B cell (primary cell): ENCODE measurements at regions of chr9 and their contacts with region 1.

Region 1: GRCh38 chr9:130042833-130043653 is at the start of gene FNBP1:
- DNase-seq: peak; percentile 88
- ATAC-seq: peak; percentile 76
- H3K4me3 ChIP-seq: peak within 1 kb of the TSS; percentile 74 to 97 (median 95)
- H3K4me3 Mint-ChIP-seq: peak within 1 kb of the TSS; percentile 100
- H3K27ac ChIP-seq: peak within 1 kb of the TSS; percentile 81 to 93
- H3K27ac Mint-ChIP-seq: peak within 1 kb of the TSS; percentile 98
- H3K4me1 ChIP-seq: peaks cover 51 to 62% of the 10 kb centered on the region in 2 donors
- H3K4me1 Mint-ChIP-seq: peaks cover 63% of the 10 kb centered on the region
- H3K27me3 ChIP-seq: no peaks in the 10 kb centered on the region
- H3K27me3 Mint-ChIP-seq: no peaks in the 10 kb centered on the region
- CTCF ChIP-seq: no peak
- total RNA-seq, gene FNBP1: 318 and 337 TPM in 2 replicates

Region 2: GRCh38 chr9:129835021-129835871 is 207.8 kb before region 1 on chr9 and contains the starts of genes C9orf78 and USP20:
- CTCF ChIA-PET with region 1: no interaction called
- POLR2A ChIA-PET with region 1: no interaction called
- intact Hi-C with region 1: loop called (anchors 5 kb)
- DNase-seq: peak; percentile 99
- ATAC-seq: peak; percentile 95
- H3K4me3 ChIP-seq: peak within 1 kb of the TSS; percentile 75 to 98 (median 85)
- H3K4me3 Mint-ChIP-seq: peak within 1 kb of the TSS; percentile 98
- H3K27ac ChIP-seq: peak within 1 kb of the TSS; percentile 85 to 92
- H3K27ac Mint-ChIP-seq: peak within 1 kb of the TSS; percentile 99
- H3K4me1 ChIP-seq: peaks cover 22 to 35% of the 10 kb centered on the region in 2 donors
- H3K4me1 Mint-ChIP-seq: peaks cover 51% of the 10 kb centered on the region
- H3K27me3 ChIP-seq: no peaks in the 10 kb centered on the region
- H3K27me3 Mint-ChIP-seq: no peaks in the 10 kb centered on the region
- CTCF ChIP-seq: no peak
- total RNA-seq, gene C9orf78: 42.8 and 43.6 TPM in 2 replicates
- total RNA-seq, gene USP20: 49.5 and 52.2 TPM in 2 replicates

Region 3: GRCh38 chr9:129988607-129989361 is 54.3 kb before region 1 on chr9:
- CTCF ChIA-PET with region 1: interaction called, 7 read pairs
- POLR2A ChIA-PET with region 1: interaction called, 107 read pairs
- intact Hi-C with region 1: loop called (anchors 1 kb)
- DNase-seq: peak; percentile 92
- ATAC-seq: peak; percentile 74
- H3K4me3 ChIP-seq: peak overlapping the region in 1 of 5 experiments; percentile 45
- H3K4me3 Mint-ChIP-seq: peak overlapping the region; percentile 76
- H3K27ac ChIP-seq: peak overlapping the region; percentile 92
- H3K27ac Mint-ChIP-seq: peak overlapping the region; percentile 93
- H3K4me1 ChIP-seq: peaks cover 77 to 90% of the 10 kb centered on the region in 2 donors
- H3K4me1 Mint-ChIP-seq: peaks cover 71% of the 10 kb centered on the region
- H3K27me3 ChIP-seq: no peaks in the 10 kb centered on the region
- H3K27me3 Mint-ChIP-seq: no peaks in the 10 kb centered on the region
- CTCF ChIP-seq: no peak

Region 4: DNA sequence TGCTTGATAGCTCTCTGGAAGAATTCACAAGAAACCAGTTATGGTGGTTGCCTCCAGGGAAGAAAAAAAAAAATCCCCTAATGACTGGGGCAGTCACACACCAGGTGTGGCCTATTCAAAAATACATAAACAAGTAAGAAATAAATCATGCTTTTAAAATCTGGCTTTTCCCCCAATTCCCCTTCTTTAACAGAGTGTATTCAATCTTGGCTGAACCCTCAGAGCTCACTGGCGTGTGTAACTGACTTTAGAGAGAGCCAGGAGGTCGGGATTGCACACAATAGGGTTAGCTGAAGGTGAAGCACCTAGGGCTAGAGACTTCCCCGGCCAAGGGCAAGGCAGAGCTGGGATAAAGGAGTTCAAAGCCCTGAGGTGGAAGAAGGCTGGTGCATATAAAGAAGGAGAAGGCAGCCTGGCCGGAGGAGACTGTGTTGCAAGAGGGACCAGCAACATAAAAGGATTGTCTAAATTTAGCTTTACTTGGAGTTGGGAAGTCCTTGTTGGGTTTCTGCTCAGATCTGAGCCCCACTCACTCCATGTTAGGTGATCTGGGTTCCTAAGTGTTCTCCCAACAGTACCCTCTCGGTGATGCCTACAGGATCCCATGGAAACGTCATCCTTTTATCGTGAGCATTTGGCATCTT is 19.8 kb before region 1 on chr9:
- CTCF ChIA-PET with region 1: interaction called, 8 read pairs
- POLR2A ChIA-PET with region 1: interaction called, 20 read pairs
- intact Hi-C with region 1: loop called (anchors 2 kb)
- DNase-seq: peak; percentile 85
- ATAC-seq: peak; percentile 82
- H3K4me3 ChIP-seq: peak overlapping the region in 3 of 5 experiments; percentile 5 to 45 (median 28)
- H3K4me3 Mint-ChIP-seq: peak overlapping the region; percentile 88
- H3K27ac ChIP-seq: peak overlapping the region; percentile 87 to 95
- H3K27ac Mint-ChIP-seq: peak overlapping the region; percentile 98
- H3K4me1 ChIP-seq: peaks cover 72 to 81% of the 10 kb centered on the region in 2 donors
- H3K4me1 Mint-ChIP-seq: peaks cover 86% of the 10 kb centered on the region
- H3K27me3 ChIP-seq: no peaks in the 10 kb centered on the region
- H3K27me3 Mint-ChIP-seq: no peaks in the 10 kb centered on the region
- CTCF ChIP-seq: no peak

Region 5: GRCh38 chr9:130139251-130139650 is 96.2 kb after region 1 on chr9:
- CTCF ChIA-PET with region 1: no interaction called
- POLR2A ChIA-PET with region 1: interaction called, 10 read pairs
- intact Hi-C with region 1: no loop called
- DNase-seq: no peak
- ATAC-seq: no peak
- H3K4me3 ChIP-seq: no peak overlapping the region
- H3K4me3 Mint-ChIP-seq: no peak overlapping the region
- H3K27ac ChIP-seq: no peak overlapping the region
- H3K27ac Mint-ChIP-seq: no peak overlapping the region
- H3K4me1 ChIP-seq: peaks cover 2 to 5% of the 10 kb centered on the region in 2 donors
- H3K4me1 Mint-ChIP-seq: peaks cover 13% of the 10 kb centered on the region
- H3K27me3 ChIP-seq: peaks cover 0 to 7% (median 2%) of the 10 kb centered on the region in 4 experiments
- H3K27me3 Mint-ChIP-seq: peaks cover 8% of the 10 kb centered on the region
- CTCF ChIP-seq: no peak

Region 6: DNA sequence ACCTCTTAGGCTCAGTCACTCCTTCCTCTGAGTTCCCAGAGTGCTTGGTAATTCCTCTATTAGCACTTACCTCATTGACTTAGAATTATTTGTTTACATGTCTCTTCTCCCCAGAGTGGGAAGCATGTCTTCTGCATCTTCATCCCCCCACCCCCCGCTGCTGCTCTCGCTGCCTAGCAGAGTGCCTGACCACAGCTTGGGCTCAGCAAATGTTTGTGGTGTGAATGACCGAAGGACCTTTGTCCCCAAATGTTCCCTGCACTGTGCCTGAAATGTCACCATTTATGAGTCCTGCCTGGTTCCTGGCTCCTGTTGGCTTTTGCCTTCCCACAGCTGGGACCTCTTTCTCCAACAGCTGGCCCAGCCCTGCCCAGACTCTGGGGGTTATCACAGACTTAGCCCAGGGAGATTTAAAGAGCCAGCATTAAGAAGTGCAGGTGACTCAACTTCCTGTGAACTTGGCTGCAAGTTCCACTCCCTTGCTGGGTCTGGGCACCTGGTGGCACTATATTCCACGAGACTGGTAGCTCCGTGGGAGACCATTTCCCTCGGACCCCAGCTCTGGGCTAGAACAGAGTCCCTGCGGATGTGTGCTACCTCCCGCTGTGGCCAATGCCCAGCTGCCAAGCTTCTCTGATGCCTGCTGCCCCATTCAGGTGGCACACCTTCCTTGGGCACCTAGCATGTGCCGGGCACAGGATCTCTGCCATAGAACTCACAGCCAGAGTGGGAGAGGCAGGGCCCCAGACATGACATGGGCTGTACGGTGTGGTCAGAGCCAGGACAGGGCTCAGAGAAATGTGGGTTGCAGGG is 220.8 kb after region 1 on chr9:
- CTCF ChIA-PET with region 1: no interaction called
- POLR2A ChIA-PET with region 1: no interaction called
- intact Hi-C with region 1: no loop called
- DNase-seq: no peak
- ATAC-seq: no peak
- H3K4me3 ChIP-seq: no peak overlapping the region
- H3K4me3 Mint-ChIP-seq: peak overlapping the region; percentile 34
- H3K27ac ChIP-seq: no peak overlapping the region
- H3K27ac Mint-ChIP-seq: no peak overlapping the region
- H3K4me1 ChIP-seq: no peaks in the 10 kb centered on the region
- H3K4me1 Mint-ChIP-seq: peaks cover 6% of the 10 kb centered on the region
- H3K27me3 ChIP-seq: peaks cover 0 to 60% (median 17%) of the 10 kb centered on the region in 4 experiments
- H3K27me3 Mint-ChIP-seq: peaks cover 66% of the 10 kb centered on the region
- CTCF ChIP-seq: no peak